GM13977 (cell line): ENCODE measurements at regions of chr4 and their contacts with region 1.

Region 1: GRCh38 chr4:18042754-18043153 is 21.2 kb upstream of the LCORL start:
- DNase-seq: no peak
- CTCF ChIP-seq: no peak

Region 2: DNA sequence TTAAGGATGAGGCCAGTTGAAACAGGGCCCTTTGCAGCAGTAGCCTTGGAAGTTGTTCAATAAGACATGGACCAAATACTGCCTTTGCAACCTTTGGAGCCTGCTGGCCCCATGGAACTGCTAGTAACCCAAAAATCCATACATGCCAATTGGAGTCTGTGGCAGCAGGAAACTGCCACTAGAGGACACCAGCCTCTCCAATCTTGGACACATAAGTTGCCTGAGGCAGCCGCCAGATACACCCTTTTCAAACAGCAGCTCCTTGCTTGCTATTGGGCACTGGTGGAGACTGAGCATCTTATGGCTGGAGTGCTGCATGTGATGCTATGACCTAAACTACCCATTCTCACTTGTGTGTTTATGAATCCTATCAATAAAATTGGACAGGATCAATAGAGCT is 480.6 kb before region 1 on chr4:
- in situ Hi-C with region 1: loop called (anchors 25 kb)
- DNase-seq: no peak
- CTCF ChIP-seq: peak; percentile 29